Heart right ventricle (tissue), 16 donors: ENCODE measurements at regions of chr5 and their contacts with region 1.

Region 1: GRCh38 chr5:139795074-139796001 is at the start of gene PSD2:
- DNase-seq: peak in 1 of 2 donors; percentile 40
- ATAC-seq: peak in 3 of 8 donors; percentile 32 to 54 (median 37)
- H3K4me3 ChIP-seq: peak within 1 kb of the TSS in 9 of 10 donors; percentile 19 to 53 (median 42)
- H3K27ac ChIP-seq: no peak within 1 kb of the TSS
- H3K4me1 ChIP-seq: peaks cover 0 to 12% (median 5%) of the 10 kb centered on the region in 9 donors
- H3K27me3 ChIP-seq: peaks cover 5 to 76% (median 57%) of the 10 kb centered on the region in 7 donors
- CTCF ChIP-seq: no peak
- total RNA-seq, gene PSD2: 0.08 to 0.09 TPM in 2 of 10 donors, not detected in the others

Region 2: GRCh38 chr5:139501381-139501780 is 294.0 kb before region 1 on chr5:
- intact Hi-C with region 1: no loop called
- DNase-seq: no peak
- ATAC-seq: no peak
- H3K4me3 ChIP-seq: no peak overlapping the region
- H3K27ac ChIP-seq: no peak overlapping the region
- H3K4me1 ChIP-seq: peaks cover 0 to 9% (median 0%) of the 10 kb centered on the region in 9 donors
- H3K27me3 ChIP-seq: no peaks in the 10 kb centered on the region
- CTCF ChIP-seq: no peak

Region 3: DNA sequence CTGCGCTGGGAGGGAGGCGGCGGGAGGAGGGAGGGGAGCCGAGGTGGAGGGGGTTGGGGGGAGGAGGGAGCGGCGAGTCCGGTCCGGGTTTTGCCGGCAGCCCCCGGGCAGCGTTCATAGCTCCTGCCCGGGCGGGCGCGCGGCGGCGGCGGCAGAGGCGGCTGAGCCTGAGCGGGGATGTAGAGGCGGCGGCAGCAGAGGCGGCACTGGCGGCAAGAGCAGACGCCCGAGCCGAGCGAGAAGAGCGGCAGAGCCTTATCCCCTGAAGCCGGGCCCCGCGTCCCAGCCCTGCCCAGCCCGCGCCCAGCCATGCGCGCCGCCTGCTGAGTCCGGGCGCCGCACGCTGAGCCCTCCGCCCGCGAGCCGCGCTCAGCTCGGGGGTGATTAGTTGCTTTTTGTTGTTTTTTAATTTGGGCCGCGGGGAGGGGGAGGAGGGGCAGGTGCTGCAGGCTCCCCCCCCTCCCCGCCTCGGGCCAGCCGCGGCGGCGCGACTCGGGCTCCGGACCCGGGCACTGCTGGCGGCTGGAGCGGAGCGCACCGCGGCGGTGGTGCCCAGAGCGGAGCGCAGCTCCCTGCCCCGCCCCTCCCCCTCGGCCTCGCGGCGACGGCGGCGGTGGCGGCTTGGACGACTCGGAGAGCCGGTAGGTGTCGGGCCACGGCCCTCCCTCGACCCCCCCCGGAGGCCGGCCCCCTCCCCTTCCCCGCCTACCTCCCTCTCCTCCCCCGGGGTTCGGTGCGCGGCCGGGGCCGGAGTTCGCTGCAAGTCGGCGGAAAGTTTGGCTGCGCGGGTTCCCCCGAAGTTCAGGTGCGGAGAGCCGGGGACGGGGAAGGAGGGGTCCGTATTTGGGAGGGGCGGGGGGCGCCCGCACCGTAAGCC is 146.9 kb before region 1 on chr5 and contains the start of gene CXXC5:
- intact Hi-C with region 1: no loop called
- DNase-seq: peak; percentile 87 to 89
- ATAC-seq: peak; percentile 43 to 84 (median 66)
- H3K4me3 ChIP-seq: peak within 1 kb of the TSS; percentile 62 to 100 (median 96)
- H3K27ac ChIP-seq: peak within 1 kb of the TSS; percentile 66 to 97 (median 92)
- H3K4me1 ChIP-seq: peaks cover 11 to 61% (median 53%) of the 10 kb centered on the region in 9 donors
- H3K27me3 ChIP-seq: peaks cover 0 to 61% (median 0%) of the 10 kb centered on the region in 7 donors
- CTCF ChIP-seq: peak in 1 of 9 donors; percentile 15
- total RNA-seq, gene CXXC5: 30.7 to 51.6 (median 37.9) TPM

Region 4: DNA sequence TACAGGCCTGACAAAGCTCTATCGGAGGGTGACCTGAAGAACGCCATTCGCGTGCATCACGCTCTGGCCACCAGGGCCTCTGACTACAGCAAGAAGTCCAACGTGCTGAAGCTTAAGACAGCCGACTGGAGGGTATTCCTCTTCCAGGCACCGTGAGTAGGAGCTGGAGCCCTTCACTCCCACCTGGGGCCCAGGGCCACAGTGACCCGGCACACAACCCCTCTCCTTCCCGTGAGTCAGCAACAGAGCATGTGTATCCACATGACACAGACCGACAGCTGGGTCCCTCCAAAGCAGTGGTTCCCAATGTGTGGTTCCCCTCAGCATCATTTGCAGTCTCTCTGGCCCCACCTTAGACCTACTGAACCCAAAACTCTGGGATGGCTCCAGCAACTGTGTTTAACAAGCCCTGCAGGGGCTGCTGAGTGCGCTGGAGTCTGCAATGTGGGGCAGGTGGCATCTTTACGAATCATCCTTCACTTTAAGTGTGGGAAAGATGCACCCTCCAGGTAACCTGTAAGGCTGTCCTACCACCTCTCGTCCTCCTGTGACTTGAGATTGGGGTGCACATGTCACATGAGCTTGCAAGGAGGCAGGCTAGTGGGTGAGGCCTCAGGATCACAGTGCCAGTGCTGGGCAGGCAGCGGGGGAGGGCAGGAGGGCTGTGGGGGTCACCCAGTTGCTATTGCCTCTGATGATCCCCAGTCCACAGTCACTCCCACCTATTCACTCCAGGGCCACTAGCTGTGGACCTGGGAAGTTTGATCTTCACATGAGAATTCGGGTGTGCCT is 42.5 kb after region 1 on chr5:
- intact Hi-C with region 1: loop called in 2 of 10 experiments (anchors 2 to 5 kb)
- DNase-seq: no peak
- ATAC-seq: no peak
- H3K4me3 ChIP-seq: no peak overlapping the region
- H3K27ac ChIP-seq: no peak overlapping the region
- H3K4me1 ChIP-seq: no peaks in the 10 kb centered on the region
- H3K27me3 ChIP-seq: peaks cover 0 to 27% (median 6%) of the 10 kb centered on the region in 7 donors
- CTCF ChIP-seq: no peak

Region 5: DNA sequence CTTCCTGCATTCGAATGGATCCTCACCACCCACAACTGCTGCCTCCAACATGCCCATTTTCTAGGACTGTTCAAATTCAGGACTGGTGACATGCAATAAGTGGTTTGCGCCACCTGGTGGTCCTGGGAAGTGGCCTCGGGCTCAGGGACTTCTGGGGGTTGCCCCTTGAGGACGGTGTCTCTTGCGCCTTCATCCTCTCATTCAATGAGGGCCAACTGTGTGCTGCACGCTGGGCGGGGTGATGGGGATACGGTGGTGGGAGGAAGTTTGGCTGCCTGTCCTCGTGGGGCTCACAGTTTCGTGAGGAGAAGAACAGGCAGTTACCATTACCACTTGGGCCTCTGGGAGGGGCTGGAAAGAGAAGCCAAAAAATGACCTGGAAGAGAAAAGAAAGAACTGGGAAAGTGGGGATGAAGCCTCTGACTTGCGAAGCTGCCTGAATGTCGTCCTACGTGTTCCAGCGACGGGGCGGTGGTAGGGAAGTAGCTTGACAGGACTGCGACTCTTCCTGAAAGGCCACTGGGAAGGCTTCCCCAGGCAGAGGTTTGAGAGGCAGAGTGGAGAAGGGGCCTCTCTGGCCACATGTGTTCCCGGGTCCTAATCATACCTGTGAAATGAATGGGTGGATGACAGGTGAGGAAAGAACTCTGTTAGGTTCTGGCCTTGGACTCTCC is 49.3 kb after region 1 on chr5:
- intact Hi-C with region 1: loop called in 3 of 10 experiments (anchors 2 to 5 kb)
- DNase-seq: peak; percentile 66 to 69
- ATAC-seq: peak in 4 of 8 donors; percentile 29 to 37 (median 35)
- H3K4me3 ChIP-seq: no peak overlapping the region
- H3K27ac ChIP-seq: no peak overlapping the region
- H3K4me1 ChIP-seq: peaks cover 3 to 25% (median 17%) of the 10 kb centered on the region in 9 donors
- H3K27me3 ChIP-seq: peaks cover 0 to 44% (median 0%) of the 10 kb centered on the region in 7 donors
- CTCF ChIP-seq: peak; percentile 38 to 76 (median 69)

Region 6: DNA sequence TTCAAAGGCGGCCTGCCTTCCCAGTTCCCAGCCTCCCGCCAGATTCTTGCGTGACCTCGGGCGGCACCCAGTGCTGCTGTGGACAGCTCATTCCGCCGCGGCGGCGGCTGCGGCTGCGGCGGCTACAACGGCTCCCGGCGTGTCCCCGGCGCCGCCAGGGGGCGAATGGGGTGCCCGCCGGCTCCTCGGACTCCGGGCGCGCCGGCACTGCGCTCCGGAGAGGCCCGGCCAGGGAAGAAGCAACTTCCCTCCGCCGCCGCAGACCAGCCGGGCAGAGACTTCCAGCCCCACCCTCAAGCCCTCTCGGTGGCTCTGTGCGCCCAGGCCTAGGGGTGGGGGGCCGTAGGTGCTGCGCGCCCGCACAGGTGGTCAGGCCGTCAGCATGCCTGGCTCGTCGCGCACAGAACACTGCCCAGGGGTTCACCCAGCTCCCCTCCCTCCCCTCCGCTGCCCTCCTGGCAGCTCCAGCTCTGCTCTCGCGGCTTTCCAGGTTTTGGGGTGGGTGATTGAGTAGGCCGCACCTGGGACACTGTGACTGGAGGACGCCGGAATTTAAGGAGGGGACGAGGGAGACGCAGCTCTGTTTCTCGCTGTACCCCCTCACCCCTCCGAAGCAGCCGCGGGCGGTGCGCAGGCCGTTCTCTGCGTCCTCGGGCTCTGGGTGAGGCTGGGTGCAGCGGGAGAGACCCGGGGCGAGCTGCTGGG is 350.6 kb after region 1 on chr5:
- intact Hi-C with region 1: loop called in 1 of 10 experiments (anchors 10 kb)
- DNase-seq: peak; percentile 55 to 82
- ATAC-seq: peak; percentile 92 to 96 (median 94)
- H3K4me3 ChIP-seq: peak overlapping the region; percentile 30 to 62 (median 54)
- H3K27ac ChIP-seq: peak overlapping the region in 1 of 10 donors; percentile 39
- H3K4me1 ChIP-seq: peaks cover 6 to 28% (median 18%) of the 10 kb centered on the region in 9 donors
- H3K27me3 ChIP-seq: peaks cover 0 to 29% (median 0%) of the 10 kb centered on the region in 7 donors
- CTCF ChIP-seq: peak; percentile 65 to 93 (median 82)